BJ (cell line): ENCODE measurements at regions of chr22 and their contacts with region 1.

Region 1: GRCh38 chr22:46798366-46799350 is 36.2 kb downstream of the TBC1D22A start:
- DNase-seq: no peak
- H3K4me3 ChIP-seq: no peak overlapping the region
- H3K27me3 ChIP-seq: no peaks in the 10 kb centered on the region
- CTCF ChIP-seq: peak; percentile 99

Region 2: GRCh38 chr22:46649141-46650077 is 149.2 kb before region 1 on chr22:
- CTCF ChIA-PET with region 1: no interaction called
- POLR2A ChIA-PET with region 1: no interaction called
- DNase-seq: no peak
- H3K4me3 ChIP-seq: no peak overlapping the region
- H3K27me3 ChIP-seq: no peaks in the 10 kb centered on the region
- CTCF ChIP-seq: no peak

Region 3: DNA sequence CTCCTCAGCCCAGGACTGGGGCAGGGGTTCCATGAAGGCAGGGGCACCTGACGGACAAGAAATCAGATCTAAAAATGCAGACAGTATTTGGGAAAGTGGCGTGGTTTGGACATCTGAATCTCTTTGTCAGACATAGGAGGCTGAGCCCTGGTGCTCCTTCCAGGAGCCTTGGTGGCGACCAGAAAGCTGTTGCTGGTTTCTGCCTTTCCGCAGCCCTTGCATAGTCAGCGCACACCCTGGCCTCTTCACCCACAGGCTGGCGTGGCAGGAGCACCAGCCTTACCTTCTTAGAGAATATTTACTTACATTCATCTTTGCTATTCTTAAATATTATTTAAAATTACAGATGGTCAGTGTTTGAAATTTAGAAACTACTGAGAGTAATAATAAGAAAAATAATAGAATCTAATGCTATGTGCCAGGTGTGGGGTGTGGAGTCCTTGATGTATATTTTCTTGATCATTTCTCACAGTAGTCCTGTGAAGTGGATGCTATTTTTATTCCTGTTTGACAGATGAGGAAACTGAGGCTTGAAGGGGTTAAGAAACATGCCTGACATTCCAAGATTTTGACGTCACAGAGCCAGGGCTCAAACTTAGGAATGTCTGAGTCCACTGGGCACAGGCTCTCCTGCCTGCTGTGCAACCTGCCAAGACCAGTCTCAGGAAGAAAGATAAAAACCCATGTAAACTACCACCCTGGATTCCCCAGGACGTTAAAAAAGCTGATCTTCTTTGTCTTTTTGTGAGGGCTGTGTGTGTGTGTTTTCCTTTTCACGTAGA is 15.3 kb after region 1 on chr22:
- CTCF ChIA-PET with region 1: interaction called, 29 read pairs
- POLR2A ChIA-PET with region 1: no interaction called
- DNase-seq: no peak
- H3K4me3 ChIP-seq: no peak overlapping the region
- H3K27me3 ChIP-seq: no peaks in the 10 kb centered on the region
- CTCF ChIP-seq: no peak

Region 4: DNA sequence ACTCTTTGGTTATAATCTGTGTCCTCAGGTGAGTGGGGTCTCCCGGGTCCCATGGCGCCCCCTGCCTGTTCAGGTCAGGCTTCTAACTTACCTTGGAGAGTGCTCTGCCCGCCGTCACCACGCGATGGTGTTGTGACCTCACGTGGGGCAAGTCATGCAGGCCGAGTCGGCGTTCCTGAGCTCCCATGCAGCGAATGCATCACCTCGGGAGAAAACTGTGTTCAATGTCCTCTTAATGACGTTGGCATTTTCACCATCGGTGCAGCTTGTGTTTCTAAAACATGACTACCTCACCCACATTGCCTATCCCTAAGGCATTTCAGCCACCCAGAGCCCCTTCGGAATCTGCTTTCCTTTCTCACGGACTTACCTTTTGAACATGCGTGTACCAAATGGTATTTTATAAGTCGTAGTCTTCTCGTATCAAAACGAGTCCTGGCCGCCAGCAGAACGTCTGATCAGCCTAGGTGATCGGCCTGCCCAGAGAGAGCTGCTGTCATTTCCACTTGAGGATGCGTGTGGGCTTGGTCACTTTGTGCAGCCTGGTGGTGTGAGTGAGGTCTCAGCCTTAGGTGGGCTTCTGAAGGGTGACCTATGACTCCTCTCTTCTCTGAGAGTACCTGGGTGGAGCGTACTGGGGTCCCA is 28.6 kb after region 1 on chr22:
- CTCF ChIA-PET with region 1: interaction called, 14 read pairs
- POLR2A ChIA-PET with region 1: no interaction called
- DNase-seq: no peak
- H3K4me3 ChIP-seq: no peak overlapping the region
- H3K27me3 ChIP-seq: no peaks in the 10 kb centered on the region
- CTCF ChIP-seq: no peak

Region 5: DNA sequence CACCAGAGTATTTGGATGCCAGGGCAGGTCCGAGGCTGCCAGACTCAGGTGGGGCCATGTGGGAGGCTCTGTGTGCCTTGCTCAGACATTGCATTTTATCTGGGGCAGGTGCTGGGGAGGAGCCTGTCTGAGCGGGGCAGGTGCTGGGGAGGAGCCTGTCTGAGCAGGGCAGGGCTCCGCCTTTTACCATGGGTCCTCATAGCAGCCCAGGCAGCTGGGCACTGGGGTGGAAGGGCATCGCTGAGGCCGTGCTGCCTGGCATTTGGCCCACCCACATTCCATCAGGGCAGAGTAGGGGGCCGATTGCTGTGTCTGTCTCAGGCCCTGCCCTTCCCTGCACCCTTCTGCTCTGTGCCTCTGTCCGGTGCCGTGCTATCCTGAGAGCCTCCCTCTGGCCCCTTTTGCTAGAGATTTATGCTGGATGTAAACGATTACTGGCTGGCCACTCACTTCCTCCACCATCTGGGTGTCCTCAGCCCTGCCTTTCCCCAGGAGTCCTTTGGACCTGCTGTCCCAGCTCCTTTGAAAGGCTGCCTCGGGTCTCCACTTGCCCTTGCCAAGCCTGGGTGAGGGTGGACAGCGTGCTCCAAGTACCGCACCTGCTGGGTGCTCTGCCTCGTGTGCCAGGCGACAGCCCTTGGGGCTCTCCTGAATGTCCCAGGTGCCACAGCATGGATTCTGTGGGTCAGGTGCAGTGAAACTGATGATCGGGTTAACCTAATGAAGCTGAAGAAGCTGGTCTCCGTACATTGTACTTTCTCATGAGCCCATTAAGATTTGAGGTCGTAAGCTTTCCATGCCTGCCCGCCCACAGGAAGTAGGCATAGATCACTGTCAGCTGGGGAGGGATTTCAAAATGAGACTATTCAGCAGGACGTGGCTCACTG is 245.4 kb after region 1 on chr22:
- CTCF ChIA-PET with region 1: no interaction called
- POLR2A ChIA-PET with region 1: no interaction called
- DNase-seq: no peak
- H3K4me3 ChIP-seq: no peak overlapping the region
- H3K27me3 ChIP-seq: no peaks in the 10 kb centered on the region
- CTCF ChIP-seq: no peak